ENCODE measurements at regions of chr10 and their contacts with region 1.

Region 1: GRCh38 chr10:13440185-13441061 is 88.4 kb downstream of the BEND7 start:
- DNase-seq: peak; percentile 63 to 85
- H3K4me3 ChIP-seq: peak overlapping the region; percentile 36
- H3K4me3 Mint-ChIP-seq: peak overlapping the region; percentile 73
- H3K27ac Mint-ChIP-seq: no peak overlapping the region
- H3K4me1 ChIP-seq: 0 out of 2 replicates have a peak, but pooled peaks cover 6% of the 10 kb centered on the region
- H3K4me1 Mint-ChIP-seq: peaks cover 7% of the 10 kb centered on the region
- H3K27me3 ChIP-seq: no peaks in the 10 kb centered on the region; the same call in 1 of the 2 replicates
- H3K27me3 Mint-ChIP-seq: peaks cover 7% of the 10 kb centered on the region
- CTCF ChIP-seq: peak; percentile 98 to 99

Region 2: GRCh38 chr10:13382703-13383398 is 57.6 kb before region 1 on chr10:
- CTCF ChIA-PET with region 1: interaction called, 10 read pairs
- POLR2A ChIA-PET with region 1: no interaction called
- intact Hi-C with region 1: no loop called
- DNase-seq: peak; percentile 58 to 62
- H3K4me3 ChIP-seq: peak overlapping the region; percentile 40
- H3K4me3 Mint-ChIP-seq: peak overlapping the region; percentile 90
- H3K27ac Mint-ChIP-seq: peak overlapping the region; percentile 81
- H3K4me1 ChIP-seq: peaks cover 7% of the 10 kb centered on the region
- H3K4me1 Mint-ChIP-seq: peaks cover 7% of the 10 kb centered on the region
- H3K27me3 ChIP-seq: no peaks in the 10 kb centered on the region
- H3K27me3 Mint-ChIP-seq: no peaks in the 10 kb centered on the region
- CTCF ChIP-seq: no peak

Region 3: GRCh38 chr10:13414894-13415293 is 25.5 kb before region 1 on chr10:
- CTCF ChIA-PET with region 1: interaction called, 23 read pairs
- POLR2A ChIA-PET with region 1: no interaction called
- intact Hi-C with region 1: loop called (anchors 1 kb)
- DNase-seq: peak; percentile 82 to 87
- H3K4me3 ChIP-seq: no peak overlapping the region
- H3K4me3 Mint-ChIP-seq: no peak overlapping the region
- H3K27ac Mint-ChIP-seq: no peak overlapping the region
- H3K4me1 ChIP-seq: peaks cover 23% of the 10 kb centered on the region
- H3K4me1 Mint-ChIP-seq: peaks cover 20% of the 10 kb centered on the region
- H3K27me3 ChIP-seq: no peaks in the 10 kb centered on the region
- H3K27me3 Mint-ChIP-seq: no peaks in the 10 kb centered on the region
- CTCF ChIP-seq: peak; percentile 58 to 70

Region 4: DNA sequence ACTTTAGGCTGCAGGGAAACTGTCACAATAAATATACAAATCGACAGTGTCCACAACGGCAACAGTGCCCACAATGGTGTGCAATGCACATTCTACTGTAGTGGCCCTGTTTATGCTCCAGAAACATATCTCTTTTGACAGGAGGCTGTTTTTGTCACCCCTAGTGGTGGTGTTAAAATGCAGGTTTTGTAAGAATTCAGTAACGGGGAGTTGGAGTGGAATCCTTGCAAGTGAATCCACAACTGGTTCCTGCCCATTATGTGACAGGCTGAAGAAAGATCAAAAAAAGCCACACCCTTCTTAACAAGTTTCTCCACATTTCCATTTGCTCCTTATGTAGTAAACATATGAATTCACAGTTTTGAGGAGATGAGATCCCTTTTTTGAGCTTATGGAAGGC is 29.8 kb after region 1 on chr10:
- CTCF ChIA-PET with region 1: no interaction called
- POLR2A ChIA-PET with region 1: no interaction called
- intact Hi-C with region 1: loop called (anchors 1 kb)
- DNase-seq: peak in 1 of 2 experiments; percentile 29
- H3K4me3 ChIP-seq: no peak overlapping the region
- H3K4me3 Mint-ChIP-seq: no peak overlapping the region
- H3K27ac Mint-ChIP-seq: no peak overlapping the region
- H3K4me1 ChIP-seq: no peaks in the 10 kb centered on the region
- H3K4me1 Mint-ChIP-seq: no peaks in the 10 kb centered on the region
- H3K27me3 ChIP-seq: no peaks in the 10 kb centered on the region
- H3K27me3 Mint-ChIP-seq: no peaks in the 10 kb centered on the region
- CTCF ChIP-seq: peak in 1 of 2 experiments; percentile 47

Region 5: DNA sequence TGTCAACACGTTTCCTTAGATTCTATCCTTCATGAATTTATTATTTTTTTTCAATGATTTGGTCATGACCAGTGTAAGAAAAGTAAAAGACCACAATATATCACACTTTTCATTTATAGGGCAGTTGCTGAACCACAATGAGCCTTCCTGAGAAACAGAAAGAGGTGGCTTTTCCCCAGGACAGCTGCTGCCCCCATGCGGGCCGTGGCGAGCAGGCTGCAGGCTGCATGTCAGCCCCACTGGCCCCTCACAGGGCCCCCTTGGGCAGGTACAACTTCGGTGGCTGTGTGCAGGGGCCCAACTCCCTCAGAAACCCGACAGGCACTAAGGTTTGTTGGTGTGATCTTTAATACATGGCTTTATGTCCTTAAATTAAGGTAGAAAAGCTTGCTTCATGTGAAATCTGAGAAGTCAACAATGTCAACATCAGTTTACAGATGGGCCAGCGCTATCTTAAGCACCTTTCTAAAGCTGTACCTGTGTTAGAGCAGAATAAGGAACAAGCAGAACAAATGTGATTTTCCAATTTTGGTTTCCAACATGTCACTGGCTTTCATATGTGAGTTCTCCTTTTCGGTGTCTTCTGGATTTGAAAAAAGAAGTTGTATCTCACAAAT is 77.8 kb after region 1 on chr10:
- CTCF ChIA-PET with region 1: no interaction called
- POLR2A ChIA-PET with region 1: no interaction called
- intact Hi-C with region 1: no loop called
- DNase-seq: peak in 1 of 2 experiments; percentile 41
- H3K4me3 ChIP-seq: no peak overlapping the region
- H3K4me3 Mint-ChIP-seq: no peak overlapping the region
- H3K27ac Mint-ChIP-seq: no peak overlapping the region
- H3K4me1 ChIP-seq: peaks cover 9% of the 10 kb centered on the region
- H3K4me1 Mint-ChIP-seq: peaks cover 10% of the 10 kb centered on the region
- H3K27me3 ChIP-seq: no peaks in the 10 kb centered on the region
- H3K27me3 Mint-ChIP-seq: no peaks in the 10 kb centered on the region
- CTCF ChIP-seq: peak; percentile 17 to 70

Region 6: DNA sequence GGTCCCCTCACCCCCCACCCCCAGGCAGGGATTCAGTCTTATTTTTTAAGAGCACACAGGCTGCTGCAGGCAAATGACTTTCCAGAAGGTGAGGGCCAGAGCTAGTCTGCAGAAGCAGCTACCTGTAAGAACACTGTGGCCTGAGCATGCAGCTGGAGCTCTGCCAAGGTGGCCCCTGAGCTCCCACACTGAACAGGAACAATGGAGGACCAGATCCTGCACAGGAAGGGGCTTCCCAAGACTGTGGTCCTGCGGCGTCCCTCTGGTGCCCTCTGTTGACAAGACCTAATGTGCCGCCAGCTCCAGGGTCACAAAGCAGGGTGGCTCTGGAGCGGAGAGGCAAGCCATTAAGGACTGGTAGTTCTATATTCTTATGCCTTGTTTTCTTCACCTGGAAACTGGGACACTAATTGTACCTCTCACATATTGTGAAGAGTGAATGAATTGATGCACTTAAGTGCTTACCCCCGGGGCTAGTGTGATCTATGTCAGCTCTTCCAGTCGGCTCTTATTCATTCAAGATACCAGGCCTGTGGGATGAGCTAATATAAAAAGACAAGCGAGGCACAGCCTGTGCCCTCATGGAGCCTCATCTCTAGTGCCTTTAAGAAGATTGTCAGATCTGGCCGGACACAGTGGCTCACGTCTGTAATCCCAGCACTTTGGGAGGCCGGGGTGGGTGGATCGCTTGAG is 96.4 kb after region 1 on chr10:
- CTCF ChIA-PET with region 1: interaction called, 9 read pairs
- POLR2A ChIA-PET with region 1: no interaction called
- intact Hi-C with region 1: loop called (anchors 1 kb)
- DNase-seq: peak; percentile 84 to 85
- H3K4me3 ChIP-seq: no peak overlapping the region
- H3K4me3 Mint-ChIP-seq: no peak overlapping the region
- H3K27ac Mint-ChIP-seq: no peak overlapping the region
- H3K4me1 ChIP-seq: peaks cover 8% of the 10 kb centered on the region
- H3K4me1 Mint-ChIP-seq: peaks cover 10% of the 10 kb centered on the region
- H3K27me3 ChIP-seq: no peaks in the 10 kb centered on the region
- H3K27me3 Mint-ChIP-seq: peaks cover 6% of the 10 kb centered on the region
- CTCF ChIP-seq: peak; percentile 85 to 93

Region 7: DNA sequence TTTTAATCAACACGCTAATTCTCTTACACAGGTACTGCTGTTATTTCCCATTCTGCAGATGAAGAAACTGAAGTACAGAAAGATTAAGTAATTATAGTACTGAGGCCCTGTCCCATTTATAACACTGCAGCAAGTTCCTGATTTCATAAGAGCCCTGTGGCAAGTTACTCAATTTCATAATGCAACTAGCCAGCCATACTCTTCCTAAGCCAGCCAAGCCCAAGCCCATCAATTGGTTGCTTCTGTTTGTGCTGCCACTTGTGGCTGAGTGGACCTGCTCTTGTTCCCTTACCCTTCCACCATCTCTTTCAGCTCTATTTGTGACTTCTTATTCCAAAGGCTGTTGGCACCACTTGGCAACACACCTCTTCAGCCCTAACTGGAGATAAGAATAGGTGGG is 126.6 kb after region 1 on chr10:
- CTCF ChIA-PET with region 1: no interaction called
- POLR2A ChIA-PET with region 1: no interaction called
- intact Hi-C with region 1: no loop called
- DNase-seq: no peak
- H3K4me3 ChIP-seq: no peak overlapping the region
- H3K4me3 Mint-ChIP-seq: no peak overlapping the region
- H3K27ac Mint-ChIP-seq: no peak overlapping the region
- H3K4me1 ChIP-seq: no peaks in the 10 kb centered on the region
- H3K4me1 Mint-ChIP-seq: no peaks in the 10 kb centered on the region
- H3K27me3 ChIP-seq: no peaks in the 10 kb centered on the region; the same call in none of the 2 replicates
- H3K27me3 Mint-ChIP-seq: peaks cover 9% of the 10 kb centered on the region
- CTCF ChIP-seq: no peak

Region 8: DNA sequence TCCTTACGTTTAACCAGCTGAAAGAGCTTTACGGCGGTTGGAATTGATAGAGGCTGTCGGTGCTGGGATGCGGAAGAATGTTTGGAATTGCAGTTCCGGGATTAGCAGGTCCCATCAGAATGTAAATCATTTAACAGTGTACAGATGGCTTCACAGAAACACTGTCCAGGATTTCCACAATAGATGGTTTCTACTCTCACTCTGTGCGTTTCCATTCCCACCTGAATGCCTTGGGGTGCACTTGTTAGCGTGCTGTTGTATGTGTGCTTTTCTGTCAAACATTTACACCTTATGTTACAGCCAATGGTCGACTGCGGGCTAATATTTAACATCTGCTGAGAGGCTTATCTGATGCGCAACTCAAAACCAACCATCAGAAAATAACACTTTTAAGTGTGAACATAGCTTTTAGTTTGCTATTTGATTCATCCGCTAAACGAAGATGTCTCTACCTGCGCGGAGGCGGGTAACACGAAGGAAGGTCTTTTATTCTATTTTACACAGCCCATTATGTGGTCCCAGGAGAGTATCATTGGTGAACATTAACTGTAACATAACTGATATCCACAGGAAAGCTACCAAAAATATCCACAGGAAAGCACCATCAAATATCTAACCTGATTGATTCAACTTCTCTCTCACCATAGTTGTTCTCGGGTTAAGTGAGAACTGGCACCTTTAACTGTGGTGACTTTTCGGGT is 325.4 kb after region 1 on chr10:
- CTCF ChIA-PET with region 1: no interaction called
- POLR2A ChIA-PET with region 1: no interaction called
- intact Hi-C with region 1: no loop called
- DNase-seq: peak; percentile 91 to 95
- H3K4me3 ChIP-seq: peak overlapping the region; percentile 4; the same call in 1 of the 2 replicates
- H3K4me3 Mint-ChIP-seq: peak overlapping the region; percentile 63
- H3K27ac Mint-ChIP-seq: peak overlapping the region; percentile 78
- H3K4me1 ChIP-seq: peaks cover 55% of the 10 kb centered on the region
- H3K4me1 Mint-ChIP-seq: peaks cover 64% of the 10 kb centered on the region
- H3K27me3 ChIP-seq: no peaks in the 10 kb centered on the region
- H3K27me3 Mint-ChIP-seq: no peaks in the 10 kb centered on the region
- CTCF ChIP-seq: no peak